Endothelial cell of umbilical vein (primary cell): ENCODE measurements at regions of chr4 and their contacts with region 1.

Region 1: GRCh38 chr4:43782391-43782790 is 666.2 kb downstream of the KCTD8 start:
- DNase-seq: no peak
- H3K4me3 ChIP-seq: no peak overlapping the region
- H3K27ac ChIP-seq: no peak overlapping the region
- H3K4me1 ChIP-seq: no peaks in the 10 kb centered on the region
- H3K27me3 ChIP-seq: no peaks in the 10 kb centered on the region
- CTCF ChIP-seq: no peak
- POLR2A ChIP-seq: no peak

Region 2: DNA sequence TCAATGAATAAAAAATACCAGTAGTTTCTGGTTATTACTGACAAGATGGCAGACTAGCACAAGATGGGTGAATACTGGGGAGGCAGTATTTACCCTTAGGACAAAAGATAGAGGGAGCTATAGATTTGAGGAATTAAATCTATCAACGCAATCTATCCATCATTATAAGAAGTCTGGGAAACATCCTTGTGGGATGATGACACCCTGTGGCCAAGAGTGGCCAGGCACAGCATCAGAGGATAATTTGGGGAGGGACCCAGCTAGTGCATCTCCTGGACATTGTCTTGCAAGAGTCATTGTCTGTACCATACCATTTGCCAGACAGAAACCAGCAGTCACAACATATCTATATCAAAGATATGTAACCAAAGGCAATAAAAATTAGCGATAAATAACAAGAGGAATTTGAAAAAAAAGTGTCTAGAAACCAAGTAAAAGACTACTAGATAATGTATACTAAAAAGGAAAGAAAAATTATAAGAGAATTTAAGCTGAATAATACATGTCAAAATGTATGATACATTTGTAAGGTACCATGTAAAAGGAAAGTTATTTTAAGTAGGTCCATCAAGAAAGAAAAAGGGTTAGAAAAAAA is 643.3 kb after region 1 on chr4:
- CTCF ChIA-PET with region 1: interaction called, 60 read pairs
- POLR2A ChIA-PET with region 1: no interaction called
- dilution Hi-C with region 1: no loop called
- intact Hi-C with region 1: loop called (anchors 1 kb)
- DNase-seq: peak; percentile 35
- H3K4me3 ChIP-seq: no peak overlapping the region
- H3K27ac ChIP-seq: no peak overlapping the region
- H3K4me1 ChIP-seq: no peaks in the 10 kb centered on the region
- H3K27me3 ChIP-seq: no peaks in the 10 kb centered on the region
- CTCF ChIP-seq: peak; percentile 47 to 54
- POLR2A ChIP-seq: no peak

Region 3: DNA sequence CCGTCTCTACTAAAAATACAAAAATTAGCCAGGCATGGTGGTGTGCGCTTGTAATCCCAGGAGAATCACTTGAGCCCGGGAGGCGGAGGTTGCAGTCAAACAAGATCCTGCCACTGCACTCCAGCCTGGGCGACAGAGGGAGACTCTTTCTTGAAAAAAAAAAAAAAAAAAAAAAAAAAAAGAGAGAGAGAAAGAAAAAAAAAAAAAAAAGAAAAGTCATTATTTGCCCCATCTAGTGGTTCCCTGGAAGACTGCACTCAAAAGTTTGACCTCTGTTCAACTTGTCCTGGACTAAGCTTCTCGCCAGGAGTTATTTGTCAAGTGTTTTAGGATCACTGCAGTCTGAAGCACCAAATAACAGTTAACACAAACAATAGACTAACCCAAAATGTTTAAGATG is 711.5 kb after region 1 on chr4:
- CTCF ChIA-PET with region 1: interaction called, 12 read pairs
- POLR2A ChIA-PET with region 1: no interaction called
- dilution Hi-C with region 1: no loop called
- intact Hi-C with region 1: loop called (anchors 2 kb)
- DNase-seq: peak; percentile 9
- H3K4me3 ChIP-seq: no peak overlapping the region
- H3K27ac ChIP-seq: no peak overlapping the region
- H3K4me1 ChIP-seq: no peaks in the 10 kb centered on the region
- H3K27me3 ChIP-seq: no peaks in the 10 kb centered on the region
- CTCF ChIP-seq: peak in 1 of 2 donors; percentile 23
- POLR2A ChIP-seq: no peak